ENCODE measurements at regions of chr10 and their contacts with region 1.

Region 1: GRCh38 chr10:46228563-46229071 is 58.2 kb upstream of the ANTXRL start:
- DNase-seq: peak; percentile 83
- H3K4me3 Mint-ChIP-seq: no peak overlapping the region
- H3K27ac Mint-ChIP-seq: no peak overlapping the region
- H3K4me1 Mint-ChIP-seq: peaks cover 3% of the 10 kb centered on the region
- H3K27me3 Mint-ChIP-seq: no peaks in the 10 kb centered on the region

Region 2: DNA sequence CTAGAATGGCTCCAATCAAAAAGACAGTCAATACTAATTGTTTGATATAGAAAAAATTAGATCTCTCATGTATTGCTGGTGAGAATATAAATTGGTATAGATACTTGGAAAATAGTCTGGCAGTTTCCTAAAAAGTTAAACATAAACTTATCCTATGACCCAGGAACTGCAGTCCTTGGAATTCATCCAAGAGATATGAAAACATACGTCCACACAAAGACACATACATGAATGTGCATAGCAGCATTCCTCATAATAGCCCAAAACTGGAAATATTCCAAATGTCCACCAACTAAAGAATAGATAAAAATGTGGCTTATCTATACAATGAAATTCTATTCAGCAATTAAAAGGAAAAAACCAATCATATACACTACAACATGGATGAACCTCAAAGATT is 684.4 kb before region 1 on chr10:
- CTCF ChIA-PET with region 1: no interaction called
- intact Hi-C with region 1: no loop called
- DNase-seq: no peak
- H3K4me3 Mint-ChIP-seq: no peak overlapping the region
- H3K27ac Mint-ChIP-seq: no peak overlapping the region
- H3K4me1 Mint-ChIP-seq: peaks cover 9% of the 10 kb centered on the region
- H3K27me3 Mint-ChIP-seq: no peaks in the 10 kb centered on the region

Region 3: GRCh38 chr10:46255801-46256747 is 27.5 kb after region 1 on chr10:
- CTCF ChIA-PET with region 1: interaction called, 10 read pairs
- intact Hi-C with region 1: loop called (anchors 2 kb)
- DNase-seq: peak; percentile 73
- H3K4me3 Mint-ChIP-seq: no peak overlapping the region
- H3K27ac Mint-ChIP-seq: peak overlapping the region; percentile 8
- H3K4me1 Mint-ChIP-seq: peaks cover 30% of the 10 kb centered on the region
- H3K27me3 Mint-ChIP-seq: no peaks in the 10 kb centered on the region

Region 4: DNA sequence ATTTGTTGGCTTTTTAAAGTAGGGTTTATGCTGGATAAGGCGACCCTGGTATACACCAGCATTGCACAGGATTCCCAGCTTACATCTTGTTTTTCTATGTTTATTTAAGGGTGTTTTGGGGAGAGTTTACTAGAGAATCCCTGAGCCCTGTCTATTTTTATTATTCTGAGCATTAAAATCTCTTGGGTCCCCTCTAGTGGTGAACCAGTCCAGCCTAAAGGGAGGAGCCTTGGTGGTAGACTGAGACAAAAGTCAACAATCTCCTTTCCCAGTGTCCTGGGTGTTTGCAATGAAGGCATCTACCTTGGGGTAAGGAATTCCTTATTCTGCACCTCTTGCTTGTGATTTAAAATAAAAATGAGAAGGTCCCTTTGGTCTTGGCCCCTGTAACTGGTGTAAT is 96.4 kb after region 1 on chr10:
- CTCF ChIA-PET with region 1: interaction called, 8 read pairs
- intact Hi-C with region 1: loop called (anchors 5 kb)
- DNase-seq: no peak
- H3K4me3 Mint-ChIP-seq: no peak overlapping the region
- H3K27ac Mint-ChIP-seq: no peak overlapping the region
- H3K4me1 Mint-ChIP-seq: no peaks in the 10 kb centered on the region
- H3K27me3 Mint-ChIP-seq: no peaks in the 10 kb centered on the region

Region 5: GRCh38 chr10:46560381-46560780 is 331.8 kb after region 1 on chr10:
- CTCF ChIA-PET with region 1: interaction called, 3 read pairs
- intact Hi-C with region 1: loop called (anchors 5 kb)
- DNase-seq: no peak
- H3K4me3 Mint-ChIP-seq: no peak overlapping the region
- H3K27ac Mint-ChIP-seq: no peak overlapping the region
- H3K4me1 Mint-ChIP-seq: peaks cover 10% of the 10 kb centered on the region
- H3K27me3 Mint-ChIP-seq: peaks cover 6% of the 10 kb centered on the region

Measured in activated naive CD4-positive, alpha-beta T cell treated with anti-CD3 and anti-CD28 coated beads for 36 hours (primary cell).